WTC11 (cell line): ENCODE measurements at regions of chr15 and their contacts with region 1.

Region 1: DNA sequence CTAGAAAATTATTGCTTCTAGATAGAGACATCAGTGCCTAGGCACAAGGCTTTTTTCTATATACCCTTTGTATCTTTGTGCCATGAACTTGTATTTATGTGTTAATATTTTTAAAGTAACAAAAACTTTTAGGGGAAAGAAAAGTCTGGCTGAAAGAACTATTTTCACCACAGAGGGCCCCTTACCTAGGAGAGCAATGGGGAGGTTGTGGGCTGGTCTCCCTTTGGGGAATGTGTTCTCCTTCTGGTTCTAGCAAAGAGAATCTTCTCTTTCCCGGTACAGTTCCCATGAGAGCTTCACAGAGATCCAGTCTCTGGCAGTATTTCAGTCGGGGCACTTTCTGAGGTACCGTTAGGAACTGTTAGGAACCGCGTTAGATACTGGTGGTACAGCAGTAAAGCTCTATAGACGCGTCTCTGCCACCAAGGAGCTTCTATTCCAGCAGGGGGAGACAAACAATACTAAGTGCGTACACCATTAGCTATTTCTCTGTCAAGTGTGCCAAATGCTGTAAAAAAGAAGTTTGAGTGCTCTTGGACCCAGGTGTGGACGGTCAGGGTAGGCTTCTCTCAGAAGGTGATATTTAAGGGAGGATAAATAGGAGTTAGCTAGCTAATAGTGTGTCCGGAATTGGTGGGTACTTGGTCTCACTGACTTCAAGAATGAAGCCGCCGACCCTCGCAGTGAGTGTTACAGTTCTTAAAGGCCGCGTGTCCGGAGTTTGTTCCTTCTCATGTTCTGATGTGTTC is 4.6 kb upstream of the EPB42 start:
- DNase-seq: peak; percentile 40
- ATAC-seq: peak; percentile 96
- H3K4me3 Mint-ChIP-seq: no peak overlapping the region
- H3K27ac Mint-ChIP-seq: no peak overlapping the region
- H3K4me1 Mint-ChIP-seq: no peaks in the 10 kb centered on the region
- H3K27me3 Mint-ChIP-seq: no peaks in the 10 kb centered on the region; the same call in 1 of the 2 replicates
- CTCF ChIP-seq: peak; percentile 55; the same call in 1 of the 2 replicates

Region 2: GRCh38 chr15:43204016-43204901 is 21.1 kb before region 1 on chr15:
- CTCF ChIA-PET with region 1: interaction called, 37 read pairs
- POLR2A ChIA-PET with region 1: no interaction called
- DNase-seq: peak; percentile 67
- ATAC-seq: peak; percentile 64
- H3K4me3 Mint-ChIP-seq: no peak overlapping the region
- H3K27ac Mint-ChIP-seq: no peak overlapping the region
- H3K4me1 Mint-ChIP-seq: peaks cover 5% of the 10 kb centered on the region
- H3K27me3 Mint-ChIP-seq: no peaks in the 10 kb centered on the region; the same call in 1 of the 2 replicates
- CTCF ChIP-seq: peak; percentile 47; the same call in 1 of the 2 replicates

Region 3: DNA sequence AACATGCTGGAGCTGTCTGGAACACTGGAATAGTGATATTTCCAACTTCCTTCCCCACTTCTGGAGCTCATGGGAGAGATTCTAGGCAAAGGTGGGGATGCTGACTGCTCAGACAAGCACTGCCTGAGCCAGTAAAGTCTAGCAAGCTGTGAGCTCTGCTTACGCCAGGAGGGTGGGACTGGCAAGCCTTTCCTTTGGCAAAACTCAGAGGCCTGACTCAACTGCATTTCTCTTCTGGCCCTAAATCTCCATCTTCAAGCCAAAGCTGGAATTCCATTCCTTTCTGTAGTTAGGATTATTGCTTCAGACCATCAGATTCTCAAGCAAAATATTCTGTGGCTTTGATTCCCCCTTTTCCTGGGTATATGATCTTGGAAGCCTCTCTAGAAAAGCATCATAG is 15.7 kb after region 1 on chr15:
- CTCF ChIA-PET with region 1: interaction called, 15 read pairs
- POLR2A ChIA-PET with region 1: no interaction called
- DNase-seq: no peak
- ATAC-seq: no peak
- H3K4me3 Mint-ChIP-seq: no peak overlapping the region
- H3K27ac Mint-ChIP-seq: no peak overlapping the region
- H3K4me1 Mint-ChIP-seq: no peaks in the 10 kb centered on the region
- H3K27me3 Mint-ChIP-seq: peaks cover 3% of the 10 kb centered on the region
- CTCF ChIP-seq: no peak

Region 4: GRCh38 chr15:43253431-43254403 is 28.3 kb after region 1 on chr15:
- CTCF ChIA-PET with region 1: interaction called, 11 read pairs
- POLR2A ChIA-PET with region 1: no interaction called
- DNase-seq: no peak
- ATAC-seq: no peak
- H3K4me3 Mint-ChIP-seq: no peak overlapping the region
- H3K27ac Mint-ChIP-seq: no peak overlapping the region
- H3K4me1 Mint-ChIP-seq: no peaks in the 10 kb centered on the region
- H3K27me3 Mint-ChIP-seq: no peaks in the 10 kb centered on the region; the same call in 1 of the 2 replicates
- CTCF ChIP-seq: no peak

Region 5: DNA sequence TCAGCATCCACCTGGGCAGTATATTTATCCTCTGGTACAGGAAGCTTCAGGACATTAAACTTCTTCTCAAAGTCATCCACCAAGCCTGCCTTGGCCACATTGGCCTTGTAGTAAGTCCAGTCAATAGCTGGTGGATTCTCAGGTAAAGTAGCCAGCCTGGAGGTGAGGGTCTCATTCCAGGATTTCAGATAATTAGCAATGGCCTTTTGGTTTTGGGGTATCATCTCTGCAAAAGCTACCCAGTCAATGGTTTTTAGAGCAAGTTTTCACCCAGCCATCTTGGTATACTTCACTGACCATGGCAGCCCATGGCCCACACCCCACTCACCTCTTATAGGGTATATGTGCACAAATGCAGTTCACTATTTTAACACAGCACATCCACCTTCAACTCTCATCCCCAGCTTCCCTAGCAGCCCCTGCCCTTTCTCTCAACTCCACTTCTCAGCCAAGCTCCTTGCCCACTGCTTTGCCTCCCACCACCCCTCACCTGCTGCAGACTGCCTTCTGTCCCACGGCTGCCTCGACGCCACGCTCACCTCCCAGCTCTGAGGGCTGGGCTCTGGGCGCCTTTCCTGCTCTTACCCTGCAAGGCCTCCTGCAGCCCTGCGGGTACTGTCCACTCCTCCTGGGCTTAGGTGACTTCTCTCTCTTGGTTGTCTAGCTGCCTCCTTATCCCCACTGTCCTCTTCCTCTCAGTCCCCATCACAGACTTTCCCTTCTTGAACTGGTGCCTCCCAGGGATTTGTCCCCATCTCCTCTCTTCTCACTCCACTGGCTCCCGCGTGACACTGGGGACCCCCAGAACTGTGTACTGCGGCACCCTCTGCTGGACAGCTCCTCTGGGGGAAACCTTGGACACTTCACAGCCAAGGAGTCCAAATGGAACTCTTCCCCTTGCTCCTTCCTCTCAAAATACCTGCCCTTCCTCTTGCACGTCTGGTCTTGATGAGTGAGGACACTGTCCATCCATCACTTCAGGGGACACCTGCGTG is 43.0 kb after region 1 on chr15:
- CTCF ChIA-PET with region 1: interaction called, 89 read pairs
- POLR2A ChIA-PET with region 1: interaction called, 5 read pairs
- DNase-seq: peak; percentile 75
- ATAC-seq: peak; percentile 88
- H3K4me3 Mint-ChIP-seq: no peak overlapping the region
- H3K27ac Mint-ChIP-seq: no peak overlapping the region
- H3K4me1 Mint-ChIP-seq: no peaks in the 10 kb centered on the region
- H3K27me3 Mint-ChIP-seq: peaks cover 3% of the 10 kb centered on the region; the same call in 1 of the 2 replicates
- CTCF ChIP-seq: no peak

Region 6: GRCh38 chr15:43293402-43293801 is 68.0 kb after region 1 on chr15:
- CTCF ChIA-PET with region 1: interaction called, 101 read pairs
- POLR2A ChIA-PET with region 1: no interaction called
- DNase-seq: peak; percentile 67
- ATAC-seq: peak; percentile 95
- H3K4me3 Mint-ChIP-seq: peak overlapping the region; percentile 61
- H3K27ac Mint-ChIP-seq: no peak overlapping the region
- H3K4me1 Mint-ChIP-seq: peaks cover 25% of the 10 kb centered on the region
- H3K27me3 Mint-ChIP-seq: peaks cover 8% of the 10 kb centered on the region
- CTCF ChIP-seq: no peak

Region 7: DNA sequence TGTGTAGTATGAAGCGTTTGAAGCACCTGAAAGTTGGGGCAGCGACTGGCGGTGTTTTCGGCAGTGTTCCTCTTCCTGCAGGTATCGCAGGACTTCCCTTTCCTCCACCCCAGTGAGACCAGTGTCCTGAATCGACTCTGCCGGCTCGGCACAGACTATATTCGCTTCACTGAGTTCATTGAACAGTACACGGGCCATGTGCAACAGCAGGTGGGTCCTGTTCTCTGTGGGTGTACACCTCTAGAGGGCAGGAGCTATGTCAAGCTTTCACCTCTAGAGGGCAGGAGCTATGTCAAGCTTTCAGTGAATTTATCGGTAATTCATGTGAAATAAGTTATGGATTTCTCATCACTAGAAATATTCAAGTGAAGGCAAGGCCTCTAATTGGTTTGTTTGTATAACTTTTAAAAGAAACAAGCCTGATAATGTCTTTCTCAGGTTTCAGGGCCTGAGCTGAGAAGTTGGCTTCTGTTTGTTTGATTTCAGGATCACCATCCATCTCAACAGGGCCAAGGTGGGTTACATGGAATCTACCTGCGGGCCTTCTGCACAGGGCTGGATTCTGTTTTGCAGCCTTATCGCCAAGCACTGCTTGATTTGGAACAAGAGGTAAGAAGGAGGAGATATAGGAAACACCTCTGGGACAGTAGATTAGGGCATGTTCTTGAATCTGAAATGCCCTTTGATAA is 150.8 kb after region 1 on chr15:
- CTCF ChIA-PET with region 1: no interaction called
- POLR2A ChIA-PET with region 1: no interaction called
- DNase-seq: peak; percentile 39
- ATAC-seq: peak; percentile 49
- H3K4me3 Mint-ChIP-seq: no peak overlapping the region
- H3K27ac Mint-ChIP-seq: no peak overlapping the region
- H3K4me1 Mint-ChIP-seq: peaks cover 13% of the 10 kb centered on the region
- H3K27me3 Mint-ChIP-seq: no peaks in the 10 kb centered on the region
- CTCF ChIP-seq: peak; percentile 65